ENCODE measurements at regions of chr1 and their contacts with region 1.

Region 1: GRCh38 chr1:70354332-70355110 is at the start of gene ANKRD13C:
- DNase-seq: peak; percentile 86 to 90 (median 88)
- H3K4me3 ChIP-seq: peak within 1 kb of the TSS; percentile 81 to 97 (median 91)
- H3K4me3 Mint-ChIP-seq: peak within 1 kb of the TSS; percentile 95 to 96
- H3K27ac ChIP-seq: peak within 1 kb of the TSS; percentile 89 to 91
- H3K27ac Mint-ChIP-seq: peak within 1 kb of the TSS; percentile 91 to 98 (median 97)
- H3K4me1 ChIP-seq: peaks cover 23 to 40% of the 10 kb centered on the region in 2 donors
- H3K4me1 Mint-ChIP-seq: peaks cover 36% of the 10 kb centered on the region
- H3K27me3 ChIP-seq: no peaks in the 10 kb centered on the region
- H3K27me3 Mint-ChIP-seq: peaks cover 0 to 2% (median 0%) of the 10 kb centered on the region in 3 donors
- CTCF ChIP-seq: no peak
- polyA plus RNA-seq, gene ANKRD13C: 4.5 to 7.6 (median 6.5) TPM

Region 2: DNA sequence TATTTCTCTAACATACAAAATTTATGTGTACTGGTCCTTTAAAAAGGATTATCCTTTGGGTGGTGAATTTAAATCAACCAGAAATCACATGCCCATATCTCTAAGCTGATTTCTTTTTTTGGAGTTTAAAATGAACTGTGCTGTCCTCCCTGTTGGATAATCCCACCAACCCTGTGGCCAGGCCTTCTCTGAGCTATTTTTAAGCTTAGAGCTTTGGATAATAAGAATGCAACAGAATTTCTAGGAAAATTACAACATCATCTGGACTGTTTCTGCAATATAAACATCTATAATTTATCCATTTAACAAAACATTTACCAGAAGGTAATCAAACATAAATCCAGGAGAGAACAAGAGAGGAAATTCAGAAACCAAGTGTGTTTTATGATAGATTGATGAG is 237.5 kb before region 1 on chr1:
- intact Hi-C with region 1: no loop called
- DNase-seq: no peak
- H3K4me3 ChIP-seq: no peak overlapping the region
- H3K4me3 Mint-ChIP-seq: no peak overlapping the region
- H3K27ac ChIP-seq: no peak overlapping the region
- H3K27ac Mint-ChIP-seq: no peak overlapping the region
- H3K4me1 ChIP-seq: no peaks in the 10 kb centered on the region
- H3K4me1 Mint-ChIP-seq: no peaks in the 10 kb centered on the region
- H3K27me3 ChIP-seq: no peaks in the 10 kb centered on the region
- H3K27me3 Mint-ChIP-seq: peaks cover 1 to 4% (median 2%) of the 10 kb centered on the region in 3 donors
- CTCF ChIP-seq: no peak

Region 3: DNA sequence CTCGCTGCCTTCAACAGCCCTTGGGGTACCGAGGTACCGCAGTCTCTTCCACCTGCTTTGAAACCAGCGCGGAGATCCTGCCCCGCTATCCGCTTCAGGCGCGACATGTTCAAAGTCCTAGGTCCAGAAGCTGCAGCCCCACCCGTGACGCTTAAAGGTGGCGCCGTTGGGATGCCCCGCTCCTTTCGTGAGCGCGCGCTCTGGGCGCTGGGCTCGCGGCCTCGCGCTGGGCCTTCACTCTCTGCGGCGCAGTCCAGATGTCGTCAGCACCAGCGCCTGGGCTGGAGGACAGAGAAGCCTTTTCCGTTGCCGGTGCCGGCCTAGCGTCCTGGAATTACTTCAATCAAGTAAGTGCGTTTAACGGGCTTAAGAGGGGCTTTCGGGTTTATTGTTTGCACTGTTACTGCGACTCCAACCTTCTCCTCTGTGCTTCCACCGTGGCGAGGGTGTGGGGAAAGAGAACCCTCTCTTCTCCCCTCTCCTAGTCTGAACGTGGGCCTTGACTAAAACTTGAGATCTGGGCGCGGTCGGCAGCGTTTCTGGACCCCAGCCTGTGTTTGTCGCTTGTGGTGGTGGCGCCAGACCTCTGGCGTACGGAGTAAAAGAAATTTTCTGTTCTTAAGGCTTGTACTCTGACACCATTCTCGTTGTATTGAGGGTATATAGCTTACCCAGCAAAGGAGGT is 148.9 kb before region 1 on chr1 and contains the start of gene LRRC40:
- intact Hi-C with region 1: loop called in 1 of 2 experiments (anchors 10 kb)
- DNase-seq: peak; percentile 89 to 95 (median 94)
- H3K4me3 ChIP-seq: peak within 1 kb of the TSS; percentile 87 to 100 (median 92)
- H3K4me3 Mint-ChIP-seq: peak within 1 kb of the TSS; percentile 96 to 99
- H3K27ac ChIP-seq: peak within 1 kb of the TSS; percentile 85 to 95
- H3K27ac Mint-ChIP-seq: peak within 1 kb of the TSS; percentile 99 to 100 (median 99)
- H3K4me1 ChIP-seq: peaks cover 15 to 34% of the 10 kb centered on the region in 2 donors
- H3K4me1 Mint-ChIP-seq: peaks cover 45% of the 10 kb centered on the region
- H3K27me3 ChIP-seq: no peaks in the 10 kb centered on the region
- H3K27me3 Mint-ChIP-seq: peaks cover 0 to 3% (median 0%) of the 10 kb centered on the region in 3 donors
- CTCF ChIP-seq: no peak
- polyA plus RNA-seq, gene LRRC40: 4.3 to 6.3 (median 5.0) TPM

Region 4: GRCh38 chr1:70410604-70411359 is 56.3 kb after region 1 on chr1 and contains the start of gene CTH:
- intact Hi-C with region 1: loop called (anchors 2 to 5 kb)
- DNase-seq: peak; percentile 92 to 93 (median 92)
- H3K4me3 ChIP-seq: peak within 1 kb of the TSS; percentile 43 to 82 (median 77)
- H3K4me3 Mint-ChIP-seq: peak within 1 kb of the TSS; percentile 98 to 99
- H3K27ac ChIP-seq: peak within 1 kb of the TSS; percentile 90 to 94
- H3K27ac Mint-ChIP-seq: peak within 1 kb of the TSS; percentile 92 to 99 (median 97)
- H3K4me1 ChIP-seq: peaks cover 10 to 15% of the 10 kb centered on the region in 2 donors
- H3K4me1 Mint-ChIP-seq: peaks cover 15% of the 10 kb centered on the region
- H3K27me3 ChIP-seq: no peaks in the 10 kb centered on the region
- H3K27me3 Mint-ChIP-seq: peaks cover 3 to 14% (median 8%) of the 10 kb centered on the region in 3 donors
- CTCF ChIP-seq: no peak
- polyA plus RNA-seq, gene CTH: 0.16 to 1.5 (median 0.28) TPM